SK-N-SH (cell line): ENCODE measurements at regions of chr12 and their contacts with region 1.

Region 1: DNA sequence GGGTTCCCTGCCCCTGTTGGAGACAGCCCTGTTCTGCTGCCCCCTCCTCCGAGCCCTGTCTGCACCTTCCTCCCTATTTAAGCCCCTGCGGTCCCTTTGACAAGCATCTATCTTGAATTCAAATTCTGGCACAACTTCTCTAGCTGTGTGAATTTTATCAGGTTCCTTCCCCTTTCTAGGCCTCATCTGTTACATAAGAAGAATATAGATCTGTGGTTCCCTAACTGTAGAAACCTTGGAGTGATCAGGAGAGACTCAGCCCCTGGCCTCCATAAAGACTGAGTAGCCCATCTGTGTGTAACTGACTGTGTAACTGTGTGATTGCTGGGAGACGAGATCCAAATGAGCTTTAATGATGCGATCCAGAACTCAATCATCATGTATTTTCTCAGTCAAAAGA is 13.0 kb upstream of the RACGAP1 start:
- DNase-seq: no peak
- H3K4me3 ChIP-seq: no peak overlapping the region
- H3K27ac ChIP-seq: no peak overlapping the region
- H3K4me1 ChIP-seq: peaks cover 0 to 3% of the 10 kb centered on the region in 2 experiments; a peak in 1 of 4 replicates
- H3K27me3 ChIP-seq: no peaks in the 10 kb centered on the region
- CTCF ChIP-seq: no peak
- EP300 ChIP-seq: no peak
- RAD21 ChIP-seq: no peak

Region 2: DNA sequence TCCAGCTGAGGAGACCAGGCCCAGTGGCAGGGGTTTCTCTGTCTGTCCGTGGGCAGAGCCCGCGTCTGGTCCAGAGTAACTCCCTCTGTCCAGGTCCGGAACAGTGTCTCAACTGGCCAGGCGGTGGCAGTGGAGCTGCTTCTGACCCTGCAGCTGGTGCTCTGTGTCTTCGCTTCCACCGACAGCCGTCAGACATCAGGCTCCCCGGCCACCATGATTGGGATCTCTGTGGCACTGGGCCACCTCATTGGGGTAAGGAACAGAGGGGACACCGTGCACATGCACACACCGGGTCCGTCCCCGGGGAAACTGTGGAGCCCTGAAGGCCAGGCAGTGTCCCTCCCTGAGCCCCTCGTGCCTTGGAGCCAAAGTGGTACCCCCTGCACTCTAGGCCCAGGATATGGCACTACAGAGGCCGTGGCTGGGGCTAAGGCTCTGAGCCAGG is 64.1 kb before region 1 on chr12:
- CTCF ChIA-PET with region 1: interaction called, 110 read pairs
- POLR2A ChIA-PET with region 1: interaction called, 5 read pairs
- DNase-seq: peak; percentile 88
- H3K4me3 ChIP-seq: no peak overlapping the region
- H3K27ac ChIP-seq: peak overlapping the region in 1 of 2 experiments; percentile 73; a peak in 2 of 4 replicates
- H3K4me1 ChIP-seq: peaks cover 0 to 54% of the 10 kb centered on the region in 2 experiments; a peak in 2 of 4 replicates
- H3K27me3 ChIP-seq: no peaks in the 10 kb centered on the region
- CTCF ChIP-seq: peak; percentile 63
- EP300 ChIP-seq: no peak
- RAD21 ChIP-seq: peak; percentile 93

Region 3: GRCh38 chr12:50006789-50007436 is 31.4 kb before region 1 on chr12:
- CTCF ChIA-PET with region 1: interaction called, 25 read pairs
- POLR2A ChIA-PET with region 1: no interaction called
- DNase-seq: no peak
- H3K4me3 ChIP-seq: no peak overlapping the region
- H3K27ac ChIP-seq: peak overlapping the region; percentile 3 to 87; a peak in 3 of 4 replicates
- H3K4me1 ChIP-seq: peaks cover 6 to 41% of the 10 kb centered on the region in 2 experiments; a peak in 2 of 4 replicates
- H3K27me3 ChIP-seq: no peaks in the 10 kb centered on the region
- CTCF ChIP-seq: no peak
- EP300 ChIP-seq: peak in 1 of 2 experiments; percentile 80; a peak in 2 of 4 replicates
- RAD21 ChIP-seq: no peak

Region 4: DNA sequence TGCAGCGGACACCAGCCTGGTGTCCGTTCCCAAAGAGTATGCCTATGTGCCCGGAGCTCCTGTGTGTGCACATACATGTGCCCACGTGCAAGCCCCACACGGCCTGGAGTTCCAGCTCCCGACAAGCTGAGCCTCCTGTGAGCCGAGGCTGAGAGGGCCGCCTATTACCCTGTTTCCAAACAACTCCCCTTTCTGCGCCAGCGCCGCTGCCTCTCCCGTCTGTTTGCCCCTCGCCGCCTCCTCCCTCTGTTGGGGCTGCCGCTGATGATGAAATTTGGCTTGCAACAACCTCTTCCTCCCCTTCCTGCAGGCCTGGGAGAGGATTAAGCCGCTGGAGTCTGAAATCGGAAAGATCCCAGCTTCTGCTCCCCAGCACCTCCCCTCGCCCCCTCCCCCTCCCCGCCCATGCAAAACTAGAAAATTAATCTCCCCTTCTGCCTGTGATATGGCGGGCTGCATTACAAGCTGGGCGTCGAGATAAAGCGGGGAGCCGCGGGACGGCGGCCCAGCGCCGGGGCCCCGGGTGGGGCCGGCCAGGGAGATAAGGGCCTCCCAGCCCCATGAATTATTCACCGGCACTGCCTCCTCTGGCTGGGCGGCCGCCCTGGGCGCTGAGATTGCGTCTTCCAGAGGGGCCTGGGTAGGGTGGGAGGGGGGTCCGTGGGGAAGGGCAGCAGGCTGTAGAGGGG is 12.2 kb after region 1 on chr12:
- CTCF ChIA-PET with region 1: interaction called, 105 read pairs
- POLR2A ChIA-PET with region 1: no interaction called
- DNase-seq: peak; percentile 44
- H3K4me3 ChIP-seq: no peak overlapping the region
- H3K27ac ChIP-seq: no peak overlapping the region
- H3K4me1 ChIP-seq: peaks cover 0 to 5% of the 10 kb centered on the region in 2 experiments; a peak in 1 of 4 replicates
- H3K27me3 ChIP-seq: peaks cover 7% of the 10 kb centered on the region
- CTCF ChIP-seq: no peak
- EP300 ChIP-seq: no peak
- RAD21 ChIP-seq: no peak

Region 5: GRCh38 chr12:50066433-50066832 is 28.1 kb after region 1 on chr12:
- CTCF ChIA-PET with region 1: interaction called, 61 read pairs
- POLR2A ChIA-PET with region 1: no interaction called
- DNase-seq: no peak
- H3K4me3 ChIP-seq: no peak overlapping the region
- H3K27ac ChIP-seq: peak overlapping the region in 1 of 2 experiments; percentile 64; a peak in 2 of 4 replicates
- H3K4me1 ChIP-seq: peaks cover 9 to 19% of the 10 kb centered on the region in 2 experiments; a peak in 2 of 4 replicates
- H3K27me3 ChIP-seq: no peaks in the 10 kb centered on the region
- CTCF ChIP-seq: no peak
- EP300 ChIP-seq: no peak
- RAD21 ChIP-seq: no peak